A549 (cell line): ENCODE measurements at regions of chr20 and their contacts with region 1.

Region 1: GRCh38 chr20:49338061-49338460 is 60.2 kb upstream of the ZNFX1 start:
- DNase-seq: no peak
- ATAC-seq: no peak
- H3K4me3 ChIP-seq: no peak overlapping the region
- H3K27ac ChIP-seq: no peak overlapping the region
- H3K4me1 ChIP-seq: peaks cover 9% of the 10 kb centered on the region
- CTCF ChIP-seq: no peak
- EP300 ChIP-seq: no peak
- POLR2A ChIP-seq: no peak
- RAD21 ChIP-seq: no peak

Region 2: GRCh38 chr20:49323622-49324238 is 14.3 kb before region 1 on chr20:
- CTCF ChIA-PET with region 1: interaction called, 58 read pairs
- POLR2A ChIA-PET with region 1: no interaction called
- DNase-seq: peak in 1 of 2 experiments; percentile 47
- ATAC-seq: peak; percentile 58 to 68
- H3K4me3 ChIP-seq: no peak overlapping the region
- H3K27ac ChIP-seq: no peak overlapping the region
- H3K4me1 ChIP-seq: peaks cover 4% of the 10 kb centered on the region; the same call in 1 of the 3 replicates
- CTCF ChIP-seq: no peak
- EP300 ChIP-seq: no peak
- POLR2A ChIP-seq: no peak
- RAD21 ChIP-seq: peak; percentile 33 to 44; a peak in 2 of 5 replicates

Region 3: DNA sequence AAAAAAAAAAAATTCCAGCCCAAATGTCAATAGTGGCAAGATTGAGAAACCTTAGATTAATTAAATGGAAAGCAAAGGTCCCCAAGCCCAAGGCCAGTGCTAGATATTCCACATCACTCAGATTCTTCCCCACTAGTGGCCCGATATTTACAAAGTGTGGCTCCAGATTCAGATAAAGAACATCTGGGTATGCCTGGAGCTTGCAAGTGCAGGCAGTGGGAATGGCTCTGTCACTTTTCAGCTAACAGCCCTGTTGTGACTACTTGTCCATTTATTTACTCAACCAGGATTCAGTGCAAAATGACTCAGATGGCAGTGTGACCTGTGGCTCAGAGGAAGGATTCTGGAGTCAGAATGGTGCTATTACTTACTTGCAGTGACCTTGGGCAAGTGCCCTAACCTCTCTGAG is 152.6 kb after region 1 on chr20:
- CTCF ChIA-PET with region 1: interaction called, 291 read pairs
- POLR2A ChIA-PET with region 1: no interaction called
- DNase-seq: peak in 1 of 2 experiments; percentile 19
- ATAC-seq: no peak
- H3K4me3 ChIP-seq: no peak overlapping the region
- H3K27ac ChIP-seq: no peak overlapping the region
- H3K4me1 ChIP-seq: no peaks in the 10 kb centered on the region
- CTCF ChIP-seq: no peak
- EP300 ChIP-seq: no peak
- POLR2A ChIP-seq: no peak
- RAD21 ChIP-seq: no peak

Region 4: DNA sequence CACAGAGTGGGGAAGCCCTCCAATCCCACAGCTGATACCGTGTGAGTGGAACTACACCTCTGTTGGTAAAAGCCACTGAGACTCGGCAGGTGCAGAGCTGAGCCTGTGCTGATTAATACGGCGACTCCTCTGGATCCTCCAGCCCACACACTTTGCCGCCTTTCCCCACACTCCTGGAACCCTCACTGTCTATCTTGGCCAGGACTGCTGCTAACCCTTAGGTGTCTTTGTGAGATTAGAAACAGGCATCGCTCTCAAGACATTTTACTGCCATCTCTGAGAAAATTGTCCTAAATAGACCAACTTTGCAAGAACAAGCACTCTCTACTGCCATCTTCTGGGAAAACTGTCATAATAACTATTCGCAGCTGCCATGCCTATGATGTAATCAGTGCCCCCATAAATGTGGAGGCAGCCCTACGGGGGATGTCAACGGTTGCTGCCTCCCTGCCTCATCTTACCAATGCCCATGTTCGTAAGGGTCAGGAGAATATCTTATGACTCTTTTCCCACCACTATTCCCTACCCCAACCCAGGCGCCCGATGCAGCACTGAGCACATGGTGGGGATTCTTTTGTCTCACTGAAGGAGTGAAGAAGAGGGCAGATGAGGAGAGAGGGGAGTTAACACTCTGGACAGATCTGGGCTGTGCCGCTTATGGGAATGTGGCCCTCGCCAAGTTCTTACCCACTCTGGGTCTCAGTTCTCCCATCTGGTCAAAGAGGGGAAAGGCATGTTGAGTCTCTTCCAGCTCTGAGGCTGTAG is 170.6 kb after region 1 on chr20:
- CTCF ChIA-PET with region 1: interaction called, 219 read pairs
- POLR2A ChIA-PET with region 1: no interaction called
- DNase-seq: peak; percentile 52 to 61
- ATAC-seq: peak; percentile 66 to 80
- H3K4me3 ChIP-seq: no peak overlapping the region
- H3K27ac ChIP-seq: peak overlapping the region; percentile 21 to 50; a peak in 2 of 6 replicates
- H3K4me1 ChIP-seq: peaks cover 12% of the 10 kb centered on the region; the same call in 1 of the 3 replicates
- CTCF ChIP-seq: peak; percentile 81
- EP300 ChIP-seq: no peak
- POLR2A ChIP-seq: no peak
- RAD21 ChIP-seq: peak; percentile 67 to 72

Region 5: GRCh38 chr20:49526056-49526455 is 188.0 kb after region 1 on chr20:
- CTCF ChIA-PET with region 1: interaction called, 20 read pairs
- POLR2A ChIA-PET with region 1: no interaction called
- DNase-seq: no peak
- ATAC-seq: no peak
- H3K4me3 ChIP-seq: no peak overlapping the region
- H3K27ac ChIP-seq: no peak overlapping the region
- H3K4me1 ChIP-seq: no peaks in the 10 kb centered on the region
- CTCF ChIP-seq: no peak
- EP300 ChIP-seq: no peak
- POLR2A ChIP-seq: no peak
- RAD21 ChIP-seq: no peak

Region 6: DNA sequence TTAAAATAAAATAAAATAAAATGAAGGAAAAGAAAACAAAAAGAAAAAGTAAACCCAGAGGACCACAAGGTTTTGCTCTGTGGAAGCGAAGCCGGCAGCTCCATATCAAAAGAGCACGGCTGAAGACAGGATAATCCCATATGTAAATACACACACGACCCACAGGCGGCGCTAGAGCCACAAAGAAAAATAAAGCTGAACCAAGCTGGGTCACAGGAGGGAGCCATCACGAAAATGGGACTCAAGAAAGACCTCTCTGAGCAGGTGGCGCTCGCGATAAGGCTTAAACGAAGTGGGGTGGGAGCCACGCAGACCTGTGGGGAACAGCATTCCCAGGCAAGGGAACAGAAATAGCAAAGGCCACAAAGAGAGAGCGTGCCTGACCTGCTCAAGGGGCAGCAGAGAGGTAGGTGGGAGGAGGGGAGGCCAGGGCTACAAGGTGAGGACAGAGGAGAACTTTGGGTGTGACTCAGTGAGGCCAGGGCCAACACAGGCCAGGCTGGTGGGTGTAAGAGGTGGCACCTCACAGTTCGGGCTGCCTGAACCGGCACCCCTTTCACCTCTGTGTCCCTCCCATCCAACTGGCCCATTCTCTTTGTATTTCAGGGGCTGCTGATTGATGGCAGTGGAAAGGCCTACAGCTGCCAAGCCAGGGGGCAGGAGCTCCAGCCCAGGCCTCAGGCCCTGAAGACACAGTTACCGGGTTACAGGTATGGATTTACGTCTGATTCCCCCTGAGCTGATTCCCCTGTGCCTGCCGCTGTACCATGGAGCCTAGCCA is 203.9 kb after region 1 on chr20:
- CTCF ChIA-PET with region 1: interaction called, 86 read pairs
- POLR2A ChIA-PET with region 1: no interaction called
- DNase-seq: peak; percentile 81 to 87
- ATAC-seq: peak; percentile 73 to 87
- H3K4me3 ChIP-seq: no peak overlapping the region
- H3K27ac ChIP-seq: peak overlapping the region; percentile 48 to 61; a peak in 5 of 6 replicates
- H3K4me1 ChIP-seq: 0 out of 3 replicates have a peak, but pooled peaks cover 5% of the 10 kb centered on the region
- CTCF ChIP-seq: peak; percentile 98
- EP300 ChIP-seq: no peak
- POLR2A ChIP-seq: no peak
- RAD21 ChIP-seq: peak; percentile 98